Testis (tissue), 5 donors: ENCODE measurements at regions of chr3 and their contacts with region 1.

Region 1: DNA sequence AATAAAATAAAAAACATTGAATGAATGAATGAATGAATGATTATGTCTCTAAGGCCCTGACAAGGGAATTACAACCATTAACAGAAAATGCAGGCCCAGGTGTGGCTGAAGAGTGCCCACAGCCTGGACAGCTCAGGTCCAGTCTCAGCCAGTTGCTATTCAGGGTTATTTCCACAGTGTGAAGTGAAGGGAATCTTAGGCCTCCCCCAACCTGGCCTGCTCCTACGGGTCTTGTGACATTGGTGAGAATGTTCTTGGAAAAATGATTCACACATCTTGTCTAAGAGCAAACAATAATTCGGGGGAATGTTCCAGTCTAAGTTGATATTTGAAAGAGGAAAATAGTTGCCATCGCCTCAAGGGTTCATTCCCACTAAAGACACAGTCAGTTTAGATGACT is 37.0 kb downstream of the MINDY4B start:
- DNase-seq: peak; percentile 32
- H3K4me3 ChIP-seq: no peak overlapping the region
- H3K27ac ChIP-seq: no peak overlapping the region
- H3K4me1 ChIP-seq: no peaks in the 10 kb centered on the region
- H3K27me3 ChIP-seq: no peaks in the 10 kb centered on the region
- CTCF ChIP-seq: no peak
- POLR2A ChIP-seq: no peak

Region 2: DNA sequence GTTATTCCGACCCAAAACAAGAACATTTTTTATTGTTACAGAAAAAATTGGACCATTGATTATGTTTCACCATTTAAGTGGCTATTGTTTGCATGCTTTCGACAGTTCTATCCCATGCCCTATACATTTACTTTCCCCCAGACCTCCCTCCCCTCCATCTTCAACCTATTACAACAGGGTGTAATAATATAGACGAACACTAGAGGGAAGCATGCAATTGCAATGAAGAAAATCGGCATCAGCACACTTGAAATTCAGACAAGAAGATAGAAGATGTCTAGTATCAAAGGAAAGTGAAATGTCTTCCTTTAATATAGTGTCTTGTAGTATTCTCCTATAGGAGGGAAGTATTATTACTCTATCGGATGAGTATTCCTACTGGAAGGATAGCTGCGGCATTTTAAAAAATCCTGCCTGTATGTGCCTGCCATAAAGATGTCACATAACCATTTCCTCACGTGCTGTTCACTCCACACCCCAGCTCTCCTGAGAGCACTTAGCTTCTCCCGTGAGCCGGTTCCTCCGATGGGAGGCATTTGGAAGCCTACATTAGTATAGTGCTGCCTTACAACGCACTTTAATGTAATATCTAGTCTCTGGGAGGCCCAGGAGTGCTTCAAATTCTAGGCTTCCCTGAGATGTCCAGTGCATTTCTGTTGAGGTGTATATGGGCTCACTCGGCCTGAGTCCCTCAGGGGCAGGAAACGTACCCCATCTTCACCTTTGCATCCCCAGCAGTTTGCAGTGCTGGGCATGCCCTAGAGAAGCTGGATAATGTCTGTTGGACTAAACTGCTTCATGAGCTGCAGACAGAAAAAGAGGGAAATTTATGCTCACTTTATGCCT is 146.8 kb before region 1 on chr3:
- intact Hi-C with region 1: loop called (anchors 10 kb)
- DNase-seq: no peak
- H3K4me3 ChIP-seq: no peak overlapping the region
- H3K27ac ChIP-seq: no peak overlapping the region
- H3K4me1 ChIP-seq: no peaks in the 10 kb centered on the region
- H3K27me3 ChIP-seq: no peaks in the 10 kb centered on the region
- CTCF ChIP-seq: peak; percentile 86 to 88 (median 86)
- POLR2A ChIP-seq: no peak

Region 3: GRCh38 chr3:150763122-150763841 is 105.0 kb before region 1 on chr3 and contains the start of gene SIAH2:
- intact Hi-C with region 1: no loop called
- DNase-seq: peak; percentile 92
- H3K4me3 ChIP-seq: peak within 1 kb of the TSS; percentile 80 to 87
- H3K27ac ChIP-seq: peak within 1 kb of the TSS; percentile 89 to 93
- H3K4me1 ChIP-seq: peaks cover 8% of the 10 kb centered on the region
- H3K27me3 ChIP-seq: no peaks in the 10 kb centered on the region
- CTCF ChIP-seq: no peak
- POLR2A ChIP-seq: no peak
- total RNA-seq, gene SIAH2: 37.5 to 46.1 TPM

Region 4: DNA sequence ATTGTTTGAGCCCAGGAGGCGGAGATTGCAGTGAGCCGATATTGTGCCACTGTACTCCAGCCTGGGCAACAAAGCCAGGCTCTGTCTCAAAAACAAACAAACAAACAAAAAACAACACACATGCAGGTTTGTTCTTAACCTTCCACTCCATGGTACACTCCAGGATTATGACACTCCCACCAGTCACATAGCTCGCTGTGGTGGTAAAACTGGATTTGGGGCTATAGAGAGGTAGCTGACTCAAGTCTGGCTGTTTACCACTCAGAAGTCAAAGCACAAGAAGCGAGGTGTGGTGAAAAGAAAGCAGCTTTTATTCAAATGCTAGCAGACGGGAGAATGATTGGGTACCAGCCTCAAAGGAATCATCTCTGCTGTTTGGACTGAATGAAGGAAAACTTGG is 56.3 kb before region 1 on chr3:
- intact Hi-C with region 1: no loop called
- DNase-seq: no peak
- H3K4me3 ChIP-seq: no peak overlapping the region
- H3K27ac ChIP-seq: no peak overlapping the region
- H3K4me1 ChIP-seq: no peaks in the 10 kb centered on the region
- H3K27me3 ChIP-seq: no peaks in the 10 kb centered on the region
- CTCF ChIP-seq: no peak
- POLR2A ChIP-seq: no peak

Region 5: GRCh38 chr3:151015767-151016477 is 147.6 kb after region 1 on chr3:
- intact Hi-C with region 1: no loop called
- DNase-seq: no peak
- H3K4me3 ChIP-seq: no peak overlapping the region
- H3K27ac ChIP-seq: no peak overlapping the region
- H3K4me1 ChIP-seq: no peaks in the 10 kb centered on the region
- H3K27me3 ChIP-seq: no peaks in the 10 kb centered on the region
- CTCF ChIP-seq: no peak
- POLR2A ChIP-seq: no peak